ENCODE measurements at regions of chr10 and their contacts with region 1.

Region 1: GRCh38 chr10:89217057-89217990 is 10.2 kb upstream of the CH25H start:
- DNase-seq: peak; percentile 70
- H3K4me3 Mint-ChIP-seq: no peak overlapping the region
- H3K27ac Mint-ChIP-seq: no peak overlapping the region
- H3K4me1 Mint-ChIP-seq: peaks cover 9% of the 10 kb centered on the region
- H3K27me3 Mint-ChIP-seq: no peaks in the 10 kb centered on the region

Region 2: DNA sequence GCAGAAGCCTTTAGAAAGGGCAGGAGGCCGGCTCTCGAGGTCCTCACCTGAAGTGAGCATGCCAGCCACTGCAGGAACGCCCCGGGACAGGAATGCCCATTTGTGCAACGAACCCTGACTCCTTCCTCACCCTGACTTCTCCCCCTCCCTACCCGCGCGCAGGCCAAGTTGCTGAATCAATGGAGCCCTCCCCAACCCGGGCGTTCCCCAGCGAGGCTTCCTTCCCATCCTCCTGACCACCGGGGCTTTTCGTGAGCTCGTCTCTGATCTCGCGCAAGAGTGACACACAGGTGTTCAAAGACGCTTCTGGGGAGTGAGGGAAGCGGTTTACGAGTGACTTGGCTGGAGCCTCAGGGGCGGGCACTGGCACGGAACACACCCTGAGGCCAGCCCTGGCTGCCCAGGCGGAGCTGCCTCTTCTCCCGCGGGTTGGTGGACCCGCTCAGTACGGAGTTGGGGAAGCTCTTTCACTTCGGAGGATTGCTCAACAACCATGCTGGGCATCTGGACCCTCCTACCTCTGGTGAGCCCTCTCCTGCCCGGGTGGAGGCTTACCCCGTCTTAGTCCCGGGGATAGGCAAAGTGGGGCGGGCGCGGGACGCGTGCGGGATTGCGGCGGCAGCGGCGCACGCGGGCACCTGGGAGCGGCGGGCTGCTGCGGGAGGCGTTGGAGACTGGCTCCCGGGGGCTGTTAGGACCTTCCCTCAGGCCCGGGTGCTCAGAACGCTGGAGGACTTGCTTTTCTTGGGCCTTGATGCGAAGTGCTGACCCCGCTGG is 226.8 kb before region 1 on chr10 and contains the start of gene FAS:
- CTCF ChIA-PET with region 1: interaction called, 12 read pairs
- POLR2A ChIA-PET with region 1: interaction called, 3 read pairs
- intact Hi-C with region 1: no loop called
- DNase-seq: peak; percentile 94
- H3K4me3 Mint-ChIP-seq: peak within 1 kb of the TSS; percentile 86
- H3K27ac Mint-ChIP-seq: peak within 1 kb of the TSS; percentile 96
- H3K4me1 Mint-ChIP-seq: peaks cover 65% of the 10 kb centered on the region
- H3K27me3 Mint-ChIP-seq: no peaks in the 10 kb centered on the region
- total RNA-seq, gene FAS: 62.2 to 63.5 TPM

Region 3: GRCh38 chr10:89207181-89207800 is 10.0 kb before region 1 on chr10 and contains the start of gene CH25H:
- CTCF ChIA-PET with region 1: interaction called, 37 read pairs
- POLR2A ChIA-PET with region 1: no interaction called
- intact Hi-C with region 1: no loop called
- DNase-seq: peak; percentile 71
- H3K4me3 Mint-ChIP-seq: peak within 1 kb of the TSS; percentile 64
- H3K27ac Mint-ChIP-seq: no peak within 1 kb of the TSS
- H3K4me1 Mint-ChIP-seq: peaks cover 11% of the 10 kb centered on the region
- H3K27me3 Mint-ChIP-seq: peaks cover 29% of the 10 kb centered on the region
- total RNA-seq, gene CH25H: 0.12 TPM in 1 of 2 experiments, not detected in the other

Region 4: GRCh38 chr10:89242840-89243568 is 25.7 kb after region 1 on chr10:
- CTCF ChIA-PET with region 1: interaction called, 11 read pairs
- POLR2A ChIA-PET with region 1: no interaction called
- intact Hi-C with region 1: no loop called
- DNase-seq: no peak
- H3K4me3 Mint-ChIP-seq: no peak overlapping the region
- H3K27ac Mint-ChIP-seq: no peak overlapping the region
- H3K4me1 Mint-ChIP-seq: no peaks in the 10 kb centered on the region
- H3K27me3 Mint-ChIP-seq: no peaks in the 10 kb centered on the region

Region 5: DNA sequence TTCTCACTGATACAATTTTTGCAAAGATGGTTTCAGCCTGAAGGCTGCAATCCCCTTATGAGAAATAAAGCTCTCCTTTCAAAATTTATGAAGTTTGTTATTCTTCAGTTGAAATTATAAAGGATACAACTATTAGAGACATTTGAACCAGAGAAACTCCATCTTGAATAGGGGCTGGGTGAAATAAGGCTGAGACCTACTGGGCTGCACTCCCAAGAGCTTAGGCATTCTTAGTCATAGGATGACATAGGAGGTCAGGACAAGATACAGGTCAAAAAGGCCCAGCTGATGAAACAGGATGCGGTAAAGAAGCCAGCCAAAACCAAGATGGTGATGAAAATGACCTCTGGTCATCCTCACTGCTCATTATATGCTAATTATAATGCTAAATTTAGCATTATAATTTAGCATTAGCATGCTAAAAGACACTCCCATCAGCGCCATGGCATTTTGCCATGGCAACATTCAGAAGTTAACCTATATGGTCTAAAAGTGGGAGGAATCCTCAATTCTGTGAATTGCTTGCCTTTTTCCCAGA is 138.1 kb after region 1 on chr10:
- CTCF ChIA-PET with region 1: no interaction called
- POLR2A ChIA-PET with region 1: no interaction called
- intact Hi-C with region 1: no loop called
- DNase-seq: no peak
- H3K4me3 Mint-ChIP-seq: no peak overlapping the region
- H3K27ac Mint-ChIP-seq: no peak overlapping the region
- H3K4me1 Mint-ChIP-seq: peaks cover 21% of the 10 kb centered on the region
- H3K27me3 Mint-ChIP-seq: peaks cover 14% of the 10 kb centered on the region

Region 6: DNA sequence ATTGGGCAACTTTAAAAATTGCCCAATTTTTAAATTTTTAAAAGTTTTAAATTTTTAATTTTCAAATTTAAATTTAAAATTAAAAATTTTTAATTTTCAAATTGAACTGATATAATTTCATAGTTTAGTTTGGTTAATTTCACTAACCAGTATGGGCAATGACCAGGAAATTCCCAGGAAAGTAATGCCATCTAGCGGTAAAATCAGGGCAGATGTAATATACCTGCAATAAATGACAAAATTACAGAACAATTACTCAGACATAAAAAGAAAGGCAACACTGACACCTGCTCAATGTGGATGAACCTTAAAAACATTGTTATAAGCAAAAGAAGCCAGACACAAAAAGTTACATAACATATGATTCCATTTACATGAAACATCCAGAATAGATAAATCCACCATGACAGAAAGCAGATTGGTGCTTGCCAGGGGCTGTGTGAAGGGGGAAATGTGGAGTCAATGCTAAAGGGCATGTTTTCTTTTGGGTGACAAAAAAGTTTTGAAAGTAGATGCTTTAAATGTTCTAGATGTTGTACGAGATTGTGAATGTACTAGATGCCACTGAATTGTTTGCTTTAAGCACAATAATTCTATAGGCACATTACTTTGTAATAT is 346.6 kb after region 1 on chr10:
- CTCF ChIA-PET with region 1: interaction called, 10 read pairs
- POLR2A ChIA-PET with region 1: no interaction called
- intact Hi-C with region 1: loop called (anchors 1 kb)
- DNase-seq: no peak
- H3K4me3 Mint-ChIP-seq: no peak overlapping the region
- H3K27ac Mint-ChIP-seq: no peak overlapping the region
- H3K4me1 Mint-ChIP-seq: no peaks in the 10 kb centered on the region
- H3K27me3 Mint-ChIP-seq: peaks cover 6% of the 10 kb centered on the region

Region 7: GRCh38 chr10:89679986-89680385 is 462.7 kb after region 1 on chr10:
- CTCF ChIA-PET with region 1: no interaction called
- POLR2A ChIA-PET with region 1: no interaction called
- intact Hi-C with region 1: no loop called
- DNase-seq: no peak
- H3K4me3 Mint-ChIP-seq: no peak overlapping the region
- H3K27ac Mint-ChIP-seq: no peak overlapping the region
- H3K4me1 Mint-ChIP-seq: no peaks in the 10 kb centered on the region
- H3K27me3 Mint-ChIP-seq: peaks cover 7% of the 10 kb centered on the region

Measured in activated CD4-positive, alpha-beta memory T cell treated with anti-CD3 and anti-CD28 coated beads for 36 hours (primary cell).